ENCODE measurements at regions of chrX and their contacts with region 1.

Region 1: DNA sequence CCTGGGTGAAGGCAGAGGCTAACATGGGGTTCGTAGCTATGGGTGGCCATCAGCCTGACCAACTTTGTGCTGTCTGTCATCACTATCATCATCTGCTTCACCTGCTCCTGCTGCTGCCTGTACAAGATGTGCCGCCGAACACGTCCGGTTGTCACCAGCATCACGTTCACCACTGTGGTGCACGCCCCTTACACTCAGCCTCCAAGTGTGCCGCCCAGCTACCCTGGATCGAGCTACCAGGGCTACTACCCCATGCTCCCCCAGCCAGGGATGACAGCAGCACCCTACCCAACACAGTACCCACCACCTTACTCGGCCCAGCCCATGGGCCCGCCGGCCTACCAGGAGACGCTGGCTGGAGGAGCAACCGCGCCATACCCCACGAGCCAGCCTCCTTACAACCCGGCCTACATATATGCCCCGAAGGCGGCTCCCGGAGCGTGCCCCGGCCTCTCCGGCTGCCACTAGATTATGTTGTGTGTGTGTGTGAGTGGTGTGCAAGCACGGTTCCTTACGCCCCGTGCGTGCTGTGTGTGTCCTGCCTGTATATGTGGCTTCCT is 238.1 kb upstream of the ZCCHC13 start:
- DNase-seq: peak in 1 of 10 donors; percentile 43

Region 2: DNA sequence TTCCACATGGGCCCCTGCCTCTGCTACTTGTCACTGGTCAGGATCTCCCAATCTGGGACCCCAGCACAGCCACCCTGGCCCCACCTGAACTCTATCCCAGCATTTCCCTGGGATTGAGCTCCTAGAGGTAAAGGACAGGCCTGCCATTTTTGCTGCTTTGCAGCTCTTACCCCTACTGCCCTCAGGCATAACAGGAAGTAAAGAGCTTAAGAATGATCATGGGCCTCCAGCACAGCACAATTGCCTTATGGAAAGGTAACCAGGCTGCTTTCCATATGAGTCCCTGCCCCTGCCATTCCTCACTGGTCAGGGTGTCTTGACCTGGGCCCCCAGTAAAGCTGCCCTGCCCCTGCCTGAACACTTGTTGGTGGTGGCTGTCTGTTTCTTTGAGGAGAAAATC is 16.8 kb before region 1 on chrX:
- intact Hi-C with region 1: loop called (anchors 1 kb)
- DNase-seq: no peak